ENCODE measurements at regions of chr6 and their contacts with region 1.

Region 1: DNA sequence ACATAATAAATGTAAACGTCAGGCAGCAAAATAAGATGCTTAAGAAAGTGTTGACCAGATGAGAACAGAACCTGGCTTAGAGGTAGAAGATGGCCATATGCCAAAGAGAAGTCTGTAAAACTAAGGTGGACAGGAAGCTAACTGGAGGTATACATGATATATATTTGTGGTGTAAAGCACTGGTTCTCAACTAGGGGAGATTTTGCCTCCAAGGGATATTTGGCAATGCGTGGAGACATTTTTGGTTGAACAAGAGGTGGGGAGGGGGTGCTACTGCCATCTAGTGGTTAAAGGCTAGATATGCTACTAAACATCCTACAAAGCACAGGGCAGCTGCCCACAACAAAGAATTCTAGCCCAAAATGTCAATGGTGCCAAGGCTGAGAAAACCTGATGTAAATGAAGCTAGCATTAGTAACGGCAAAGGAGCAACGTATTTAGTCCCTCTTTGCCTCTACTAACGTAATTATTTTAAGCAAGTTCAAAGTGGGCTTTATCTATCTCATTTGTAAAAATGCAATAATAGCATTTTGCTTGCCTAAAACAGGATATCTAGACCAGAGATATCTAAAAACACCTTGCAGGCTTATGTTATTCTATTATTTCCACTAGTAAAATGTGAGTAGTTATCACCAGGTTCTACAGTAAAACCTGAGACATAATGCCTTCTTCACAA is 182.6 kb downstream of the RNGTT start:
- DNase-seq: peak; percentile 38
- H3K4me3 ChIP-seq: no peak overlapping the region
- H3K27ac ChIP-seq: no peak overlapping the region
- H3K4me1 ChIP-seq: no peaks in the 10 kb centered on the region
- H3K27me3 ChIP-seq: no peaks in the 10 kb centered on the region
- CTCF ChIP-seq: peak; percentile 75

Region 2: GRCh38 chr6:87929843-87930288 is 851.0 kb before region 1 on chr6:
- CTCF ChIA-PET with region 1: no interaction called
- POLR2A ChIA-PET with region 1: no interaction called
- intact Hi-C with region 1: loop called (anchors 2 kb)
- DNase-seq: peak; percentile 42 to 62
- H3K4me3 ChIP-seq: no peak overlapping the region
- H3K27ac ChIP-seq: no peak overlapping the region
- H3K4me1 ChIP-seq: no peaks in the 10 kb centered on the region
- H3K27me3 ChIP-seq: no peaks in the 10 kb centered on the region
- CTCF ChIP-seq: peak; percentile 78

Region 3: GRCh38 chr6:88804701-88805100 is 23.8 kb after region 1 on chr6:
- CTCF ChIA-PET with region 1: no interaction called
- POLR2A ChIA-PET with region 1: no interaction called
- intact Hi-C with region 1: loop called (anchors 1 kb)
- DNase-seq: no peak
- H3K4me3 ChIP-seq: no peak overlapping the region
- H3K27ac ChIP-seq: no peak overlapping the region
- H3K4me1 ChIP-seq: no peaks in the 10 kb centered on the region
- H3K27me3 ChIP-seq: no peaks in the 10 kb centered on the region
- CTCF ChIP-seq: no peak

Region 4: DNA sequence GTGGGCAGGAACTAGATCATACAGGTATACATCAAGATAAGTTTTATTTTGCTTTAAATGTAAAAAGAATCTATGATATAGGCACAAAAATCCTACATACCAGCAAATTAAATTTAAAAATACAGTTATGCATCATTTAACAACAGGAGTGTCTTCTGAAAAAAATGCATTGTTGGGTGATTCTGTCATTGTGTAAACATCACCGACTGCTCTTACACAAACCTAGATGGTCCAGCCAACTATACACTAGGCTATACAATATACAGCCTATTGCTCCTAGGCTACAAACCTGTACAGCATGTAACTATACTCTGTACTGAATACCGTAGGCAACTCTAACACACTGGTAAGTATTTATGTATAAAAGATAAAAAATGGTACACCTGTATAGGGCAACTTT is 43.1 kb after region 1 on chr6:
- CTCF ChIA-PET with region 1: no interaction called
- POLR2A ChIA-PET with region 1: no interaction called
- intact Hi-C with region 1: no loop called
- DNase-seq: peak in 1 of 2 experiments; percentile 52
- H3K4me3 ChIP-seq: no peak overlapping the region
- H3K27ac ChIP-seq: no peak overlapping the region
- H3K4me1 ChIP-seq: peaks cover 7% of the 10 kb centered on the region; the same call in 1 of the 2 replicates
- H3K27me3 ChIP-seq: no peaks in the 10 kb centered on the region
- CTCF ChIP-seq: no peak